ENCODE measurements at regions of chr19 and their contacts with region 1.

Region 1: DNA sequence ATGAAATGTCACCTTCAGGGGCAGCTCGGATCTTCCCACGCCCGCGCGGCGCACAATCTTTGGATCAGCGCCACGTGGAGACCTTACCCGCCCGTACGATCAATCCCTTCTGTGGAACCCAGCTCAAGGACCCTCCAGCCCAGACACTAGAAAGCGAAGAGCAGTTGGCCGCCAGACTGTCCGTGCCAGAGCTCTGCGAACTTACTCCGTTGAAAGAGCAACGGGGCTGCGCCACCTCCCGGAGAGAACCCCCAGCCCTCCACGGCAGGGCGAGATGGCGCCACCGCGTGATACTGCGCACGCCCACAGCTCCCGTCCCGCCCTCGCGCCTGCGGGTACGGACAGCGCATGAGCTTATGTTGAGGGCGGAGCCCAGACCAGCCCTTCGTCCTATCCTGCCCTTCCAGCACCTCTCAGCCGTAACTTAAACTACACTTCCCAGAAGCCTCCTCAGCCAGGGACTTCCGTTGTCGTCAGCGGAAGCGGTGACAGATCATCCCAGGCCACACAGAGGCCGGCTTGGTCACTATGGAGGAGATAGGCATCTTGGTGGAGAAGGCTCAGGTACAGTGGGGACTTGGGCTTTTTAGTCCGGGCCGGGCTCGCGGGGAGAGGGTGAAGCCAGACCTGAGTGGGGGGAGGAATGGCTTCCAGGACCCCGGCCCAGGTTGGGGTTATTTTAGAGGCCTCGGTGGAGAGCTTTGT is at the start of gene PSMC4:
- DNase-seq: peak; percentile 99
- ATAC-seq: peak; percentile 98
- H3K4me3 ChIP-seq: peak within 1 kb of the TSS; percentile 93
- H3K27ac ChIP-seq: peak within 1 kb of the TSS; percentile 89
- H3K4me1 ChIP-seq: peaks cover 10% of the 10 kb centered on the region; the same call in 1 of the 2 replicates
- H3K27me3 ChIP-seq: no peaks in the 10 kb centered on the region
- CTCF ChIP-seq: peak; percentile 86 to 96 (median 87); a peak in 5 of 6 replicates
- EP300 ChIP-seq: no peak
- POLR2A ChIP-seq: peak; percentile 97
- RAD21 ChIP-seq: peak; percentile 85
- polyA plus RNA-seq, gene PSMC4: 203 to 328 TPM

Region 2: GRCh38 chr19:39679056-39679790 is 291.6 kb before region 1 on chr19:
- CTCF ChIA-PET with region 1: interaction called, 43 read pairs
- POLR2A ChIA-PET with region 1: interaction called, 7 read pairs
- RAD21 ChIA-PET with region 1: interaction called, 20 read pairs
- SMC1A ChIA-PET with region 1: interaction called, 23 read pairs
- in situ Hi-C with region 1: no loop called
- intact Hi-C with region 1: loop called (anchors 5 kb)
- DNase-seq: peak; percentile 86
- ATAC-seq: peak; percentile 86
- H3K4me3 ChIP-seq: peak overlapping the region; percentile 86
- H3K27ac ChIP-seq: peak overlapping the region; percentile 98
- H3K4me1 ChIP-seq: peaks cover 61% of the 10 kb centered on the region
- H3K27me3 ChIP-seq: no peaks in the 10 kb centered on the region
- CTCF ChIP-seq: no peak
- EP300 ChIP-seq: peak; percentile 6 to 81
- POLR2A ChIP-seq: 0 out of 2 replicates have a peak, but pooled peaks have one; percentile 6
- RAD21 ChIP-seq: 0 out of 2 replicates have a peak, but pooled peaks have one; percentile 18

Region 3: GRCh38 chr19:39846176-39846677 is 124.6 kb before region 1 on chr19 and contains the start of gene FBL:
- CTCF ChIA-PET with region 1: interaction called, 65 read pairs
- POLR2A ChIA-PET with region 1: interaction called, 33 read pairs
- RAD21 ChIA-PET with region 1: interaction called, 73 read pairs
- SMC1A ChIA-PET with region 1: interaction called, 32 read pairs
- in situ Hi-C with region 1: no loop called
- intact Hi-C with region 1: no loop called
- DNase-seq: peak; percentile 82
- ATAC-seq: peak; percentile 94
- H3K4me3 ChIP-seq: peak within 1 kb of the TSS; percentile 70
- H3K27ac ChIP-seq: peak within 1 kb of the TSS; percentile 81
- H3K4me1 ChIP-seq: peaks cover 15% of the 10 kb centered on the region
- H3K27me3 ChIP-seq: no peaks in the 10 kb centered on the region
- CTCF ChIP-seq: no peak
- EP300 ChIP-seq: no peak
- POLR2A ChIP-seq: peak; percentile 93
- RAD21 ChIP-seq: no peak
- polyA plus RNA-seq, gene FBL: 156 to 460 TPM

Region 4: GRCh38 chr19:39906820-39907611 is 63.8 kb before region 1 on chr19:
- CTCF ChIA-PET with region 1: interaction called, 23 read pairs
- POLR2A ChIA-PET with region 1: no interaction called
- RAD21 ChIA-PET with region 1: interaction called, 21 read pairs
- SMC1A ChIA-PET with region 1: interaction called, 15 read pairs
- in situ Hi-C with region 1: no loop called
- intact Hi-C with region 1: no loop called
- DNase-seq: no peak
- ATAC-seq: no peak
- H3K4me3 ChIP-seq: no peak overlapping the region
- H3K27ac ChIP-seq: no peak overlapping the region
- H3K4me1 ChIP-seq: no peaks in the 10 kb centered on the region
- H3K27me3 ChIP-seq: no peaks in the 10 kb centered on the region
- CTCF ChIP-seq: no peak
- EP300 ChIP-seq: no peak
- POLR2A ChIP-seq: no peak
- RAD21 ChIP-seq: no peak

Region 5: GRCh38 chr19:39934584-39935363 is 36.1 kb before region 1 on chr19 and contains the start of gene FCGBP:
- CTCF ChIA-PET with region 1: interaction called, 84 read pairs
- POLR2A ChIA-PET with region 1: interaction called, 7 read pairs
- RAD21 ChIA-PET with region 1: interaction called, 73 read pairs
- SMC1A ChIA-PET with region 1: interaction called, 115 read pairs
- in situ Hi-C with region 1: no loop called
- intact Hi-C with region 1: no loop called
- DNase-seq: no peak
- ATAC-seq: no peak
- H3K4me3 ChIP-seq: no peak within 1 kb of the TSS
- H3K27ac ChIP-seq: no peak within 1 kb of the TSS
- H3K4me1 ChIP-seq: peaks cover 23% of the 10 kb centered on the region
- H3K27me3 ChIP-seq: no peaks in the 10 kb centered on the region
- CTCF ChIP-seq: no peak
- EP300 ChIP-seq: no peak
- POLR2A ChIP-seq: no peak
- RAD21 ChIP-seq: no peak
- polyA plus RNA-seq, gene FCGBP: 0.02 TPM in 1 of 2 experiments, not detected in the other

Region 6: DNA sequence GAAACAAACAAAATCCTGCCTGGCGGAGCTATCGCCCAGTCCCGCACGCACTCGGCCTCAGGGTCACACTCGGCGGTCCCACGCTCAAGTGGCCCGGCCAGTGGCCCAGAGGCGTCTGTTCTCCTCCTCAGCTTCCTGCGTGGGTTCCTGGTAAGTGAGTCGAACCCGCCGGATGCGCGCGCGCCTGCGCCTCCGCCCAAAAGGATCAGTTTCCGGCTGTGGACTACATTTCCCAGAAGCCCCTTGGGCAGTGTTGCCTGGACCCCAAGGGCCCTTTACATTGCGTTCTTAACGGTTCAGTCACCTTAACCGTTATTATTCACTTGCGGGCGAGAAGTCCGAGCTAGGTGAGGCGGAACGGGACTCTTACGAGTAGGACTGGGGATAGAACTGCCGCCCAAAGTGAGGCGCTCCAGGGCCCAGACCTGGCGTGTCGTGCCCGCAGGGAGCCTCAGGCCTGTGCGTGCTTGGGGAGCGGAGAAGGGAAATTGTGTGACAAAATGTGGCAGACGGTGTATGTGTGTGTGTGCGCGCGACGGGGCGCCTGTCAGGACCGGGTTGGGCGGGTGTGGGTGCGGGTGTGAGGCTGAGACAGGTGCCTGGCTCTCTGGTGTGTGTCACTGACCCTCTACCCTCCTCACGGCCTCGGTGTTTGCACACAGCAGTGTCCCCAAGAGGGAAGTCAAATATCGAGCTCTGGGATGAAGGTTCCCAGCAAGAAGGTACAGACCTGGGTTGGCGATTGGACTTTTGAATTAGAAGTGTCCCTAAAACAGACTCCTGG is 26.2 kb after region 1 on chr19 and contains the start of gene ZNF546:
- CTCF ChIA-PET with region 1: interaction called, 21 read pairs
- POLR2A ChIA-PET with region 1: interaction called, 23 read pairs
- RAD21 ChIA-PET with region 1: interaction called, 21 read pairs
- SMC1A ChIA-PET with region 1: interaction called, 25 read pairs
- in situ Hi-C with region 1: no loop called
- intact Hi-C with region 1: no loop called
- DNase-seq: peak; percentile 82
- ATAC-seq: peak; percentile 94
- H3K4me3 ChIP-seq: peak within 1 kb of the TSS; percentile 83
- H3K27ac ChIP-seq: peak within 1 kb of the TSS; percentile 79
- H3K4me1 ChIP-seq: peaks cover 4% of the 10 kb centered on the region; the same call in 1 of the 2 replicates
- H3K27me3 ChIP-seq: no peaks in the 10 kb centered on the region
- CTCF ChIP-seq: no peak; a peak in 1 of 6 replicates
- EP300 ChIP-seq: no peak
- POLR2A ChIP-seq: peak; percentile 98
- RAD21 ChIP-seq: no peak
- polyA plus RNA-seq, gene ZNF546: 0.88 to 1.4 TPM

Region 7: DNA sequence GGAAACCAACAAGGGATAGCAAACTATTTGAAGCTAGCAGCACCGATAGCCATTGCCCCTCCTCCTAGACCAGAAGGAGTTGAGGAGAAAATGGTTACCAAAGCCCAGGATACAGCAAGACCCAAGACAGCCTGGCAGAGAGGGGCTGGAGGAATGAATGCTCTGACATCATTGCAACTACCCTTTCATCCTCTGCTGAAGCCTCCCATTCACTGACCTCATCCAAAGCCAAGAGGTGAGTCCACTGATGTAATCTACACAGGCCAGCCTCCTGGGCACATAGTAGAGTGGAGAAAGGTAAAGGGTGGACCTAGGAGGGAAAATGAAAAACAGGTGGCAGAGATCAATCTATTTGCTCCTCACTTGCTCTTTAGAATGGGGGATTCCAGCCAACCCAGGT is 162.7 kb after region 1 on chr19:
- CTCF ChIA-PET with region 1: no interaction called
- POLR2A ChIA-PET with region 1: no interaction called
- RAD21 ChIA-PET with region 1: no interaction called
- SMC1A ChIA-PET with region 1: no interaction called
- in situ Hi-C with region 1: no loop called
- intact Hi-C with region 1: no loop called
- DNase-seq: no peak
- ATAC-seq: no peak
- H3K4me3 ChIP-seq: no peak overlapping the region
- H3K27ac ChIP-seq: no peak overlapping the region
- H3K4me1 ChIP-seq: no peaks in the 10 kb centered on the region
- H3K27me3 ChIP-seq: no peaks in the 10 kb centered on the region
- CTCF ChIP-seq: no peak
- EP300 ChIP-seq: no peak
- POLR2A ChIP-seq: no peak
- RAD21 ChIP-seq: no peak

Region 8: DNA sequence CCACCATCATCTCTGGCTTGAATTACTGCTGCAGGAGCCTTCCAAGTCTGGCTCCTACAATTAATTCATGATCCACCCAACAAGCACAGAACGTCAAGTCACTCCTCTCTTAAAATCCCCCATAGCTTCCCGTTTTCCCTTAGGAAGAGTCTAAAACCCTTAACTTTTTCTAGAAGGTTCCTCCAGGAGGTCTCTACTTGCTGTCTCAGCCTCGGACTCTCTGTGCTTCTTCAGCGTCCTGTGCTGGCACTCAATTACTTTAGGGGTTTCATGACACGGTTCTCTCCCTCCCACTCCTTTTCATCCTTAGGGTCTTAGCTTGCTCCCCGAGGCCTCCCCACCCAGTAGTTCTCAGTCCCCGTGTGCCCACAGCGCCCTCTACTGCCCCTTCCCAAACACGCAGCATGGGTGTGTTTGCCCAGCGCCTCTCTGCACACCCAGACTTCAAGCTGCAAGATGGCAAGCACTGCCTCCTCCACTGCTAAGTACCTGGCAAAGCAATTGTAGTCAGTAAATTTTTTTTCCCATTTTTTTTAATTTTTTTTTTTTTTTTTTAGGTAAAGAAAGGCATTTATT is 194.6 kb after region 1 on chr19:
- CTCF ChIA-PET with region 1: interaction called, 23 read pairs
- POLR2A ChIA-PET with region 1: interaction called, 5 read pairs
- RAD21 ChIA-PET with region 1: interaction called, 14 read pairs
- SMC1A ChIA-PET with region 1: interaction called, 10 read pairs
- in situ Hi-C with region 1: no loop called
- intact Hi-C with region 1: no loop called
- DNase-seq: no peak
- ATAC-seq: peak; percentile 90
- H3K4me3 ChIP-seq: no peak overlapping the region; the same call in 1 of the 2 replicates
- H3K27ac ChIP-seq: no peak overlapping the region
- H3K4me1 ChIP-seq: peaks cover 19% of the 10 kb centered on the region
- H3K27me3 ChIP-seq: no peaks in the 10 kb centered on the region
- CTCF ChIP-seq: peak; percentile 79 to 88 (median 84)
- EP300 ChIP-seq: no peak
- POLR2A ChIP-seq: no peak
- RAD21 ChIP-seq: peak; percentile 85